ENCODE measurements at regions of chrX and their contacts with region 1.

Region 1: DNA sequence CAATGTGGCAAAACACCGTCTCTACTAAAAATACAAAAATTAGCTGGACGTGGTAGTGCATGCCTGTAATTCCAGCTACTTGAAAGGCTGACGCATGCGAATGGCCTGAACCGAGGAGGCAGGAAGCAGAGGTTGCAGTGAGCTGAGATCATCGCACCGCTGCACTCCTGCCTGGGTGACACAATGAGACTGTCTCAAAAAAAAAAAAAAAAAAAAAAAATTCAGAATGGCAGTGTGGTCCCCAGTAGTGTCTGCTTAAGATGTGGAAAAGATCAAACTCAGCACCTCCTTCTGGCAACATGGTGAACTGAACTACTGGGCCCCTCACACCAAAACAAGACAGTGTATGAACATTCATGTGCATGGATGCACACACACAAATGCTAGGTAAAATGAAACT is 32.2 kb downstream of the SMS start:
- DNase-seq: peak; percentile 68
- ATAC-seq: peak; percentile 81
- H3K4me3 Mint-ChIP-seq: no peak overlapping the region
- H3K27ac Mint-ChIP-seq: peak overlapping the region; percentile 88
- H3K4me1 Mint-ChIP-seq: peaks cover 38% of the 10 kb centered on the region
- H3K27me3 Mint-ChIP-seq: no peaks in the 10 kb centered on the region

Region 2: GRCh38 chrX:21839334-21840192 is 133.2 kb before region 1 on chrX and contains the start of gene MBTPS2:
- CTCF ChIA-PET with region 1: interaction called, 3 read pairs
- POLR2A ChIA-PET with region 1: no interaction called
- intact Hi-C with region 1: loop called (anchors 2 to 5 kb)
- DNase-seq: peak; percentile 90
- ATAC-seq: peak; percentile 87
- H3K4me3 Mint-ChIP-seq: peak within 1 kb of the TSS; percentile 84
- H3K27ac Mint-ChIP-seq: peak within 1 kb of the TSS; percentile 92
- H3K4me1 Mint-ChIP-seq: peaks cover 11% of the 10 kb centered on the region
- H3K27me3 Mint-ChIP-seq: no peaks in the 10 kb centered on the region
- total RNA-seq, gene MBTPS2: 6.9 to 7.8 TPM

Region 3: DNA sequence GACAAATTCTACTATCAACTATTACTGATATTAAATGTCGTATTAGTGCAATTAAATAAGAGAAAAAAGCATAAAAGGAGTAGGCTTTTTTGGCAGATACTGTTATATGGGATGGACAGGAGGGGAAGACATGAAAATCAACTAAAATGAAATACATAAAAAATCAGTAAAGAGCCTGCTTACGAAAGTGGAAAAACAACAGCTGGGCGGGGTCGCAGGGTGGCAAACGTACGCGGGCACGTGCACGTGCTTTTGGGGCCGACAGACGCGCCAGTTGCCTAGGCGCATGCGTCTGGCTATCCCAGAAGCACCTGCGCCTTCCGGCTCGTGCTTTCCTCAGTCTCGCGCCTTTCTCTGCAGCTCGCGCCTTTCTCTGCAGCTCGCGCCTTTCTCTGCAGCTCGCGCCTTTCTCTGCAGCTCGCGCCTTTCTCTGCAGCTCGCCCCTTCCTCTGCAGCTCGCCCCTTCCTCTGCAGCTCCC is 116.7 kb before region 1 on chrX and contains the start of gene YY2:
- CTCF ChIA-PET with region 1: no interaction called
- POLR2A ChIA-PET with region 1: no interaction called
- intact Hi-C with region 1: loop called in 1 of 2 experiments (anchors 5 kb)
- DNase-seq: no peak
- ATAC-seq: no peak
- H3K4me3 Mint-ChIP-seq: no peak within 1 kb of the TSS
- H3K27ac Mint-ChIP-seq: no peak within 1 kb of the TSS
- H3K4me1 Mint-ChIP-seq: no peaks in the 10 kb centered on the region
- H3K27me3 Mint-ChIP-seq: no peaks in the 10 kb centered on the region
- total RNA-seq, gene YY2: 0.88 to 1.3 TPM